ENCODE measurements at regions of chr13 and their contacts with region 1.

Region 1: DNA sequence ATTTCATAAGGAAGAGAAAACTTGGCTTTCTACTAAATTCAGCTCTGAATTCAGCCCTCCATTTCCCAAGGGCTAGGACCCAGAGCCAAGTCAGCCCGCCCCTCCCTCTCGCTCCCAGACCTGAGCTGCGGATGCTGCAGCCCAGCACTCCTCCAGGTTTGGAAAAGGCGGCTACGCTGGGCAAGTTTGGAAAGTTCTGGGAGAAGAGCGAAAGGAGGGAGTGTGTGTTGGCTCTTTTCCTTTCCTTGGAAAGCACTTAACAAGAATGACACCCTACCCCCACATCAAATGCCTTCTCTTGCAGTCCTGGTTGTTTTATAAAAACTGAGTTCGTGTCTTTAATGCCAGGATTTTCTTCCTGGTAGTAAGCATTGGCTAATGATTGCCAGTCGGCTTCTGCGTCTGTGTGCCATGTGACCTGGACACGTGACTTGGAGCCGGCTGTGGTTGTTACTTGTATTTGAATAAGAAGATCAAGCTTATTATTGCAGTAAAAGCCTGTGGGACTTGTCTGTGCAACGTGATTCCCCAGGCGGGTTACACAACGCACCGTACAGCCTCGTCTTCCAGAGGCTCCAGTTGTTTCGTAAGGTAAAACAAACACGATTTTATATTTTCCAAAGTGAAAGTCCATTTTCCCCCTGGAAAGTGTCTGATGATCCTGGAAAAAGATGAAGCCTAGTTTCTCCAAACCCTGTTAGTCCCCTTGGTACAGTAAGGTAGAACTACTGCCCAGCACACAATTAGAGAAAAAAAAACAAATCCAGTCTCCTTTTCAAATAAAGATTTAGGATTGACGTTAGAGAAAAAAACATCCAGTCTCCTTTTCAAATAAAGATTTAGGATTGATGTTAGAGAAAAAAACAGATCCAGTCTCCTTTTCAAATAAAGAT is 26.9 kb upstream of the UBE2L5 start:
- DNase-seq: peak; percentile 60
- ATAC-seq: peak; percentile 85
- H3K4me3 ChIP-seq: peak overlapping the region; percentile 82
- H3K27ac ChIP-seq: peak overlapping the region; percentile 89
- H3K4me1 ChIP-seq: peaks cover 7% of the 10 kb centered on the region
- H3K27me3 ChIP-seq: no peaks in the 10 kb centered on the region
- CTCF ChIP-seq: no peak
- EP300 ChIP-seq: peak in 1 of 2 experiments; percentile 56; a peak in 1 of 4 replicates
- POLR2A ChIP-seq: peak; percentile 34
- RAD21 ChIP-seq: no peak

Region 2: GRCh38 chr13:30378191-30378590 is 17.2 kb before region 1 on chr13:
- CTCF ChIA-PET with region 1: interaction called, 14 read pairs
- POLR2A ChIA-PET with region 1: interaction called, 76 read pairs
- RAD21 ChIA-PET with region 1: interaction called, 105 read pairs
- SMC1A ChIA-PET with region 1: interaction called, 143 read pairs
- in situ Hi-C with region 1: no loop called
- intact Hi-C with region 1: loop called (anchors 2 kb)
- DNase-seq: no peak
- ATAC-seq: no peak
- H3K4me3 ChIP-seq: no peak overlapping the region
- H3K27ac ChIP-seq: no peak overlapping the region
- H3K4me1 ChIP-seq: peaks cover 41% of the 10 kb centered on the region
- H3K27me3 ChIP-seq: no peaks in the 10 kb centered on the region; a peak in 1 of 4 replicates
- CTCF ChIP-seq: no peak
- EP300 ChIP-seq: no peak
- POLR2A ChIP-seq: no peak
- RAD21 ChIP-seq: no peak

Measured in GM12878 (cell line).